ENCODE measurements at regions of chr12 and their contacts with region 1.

Region 1: DNA sequence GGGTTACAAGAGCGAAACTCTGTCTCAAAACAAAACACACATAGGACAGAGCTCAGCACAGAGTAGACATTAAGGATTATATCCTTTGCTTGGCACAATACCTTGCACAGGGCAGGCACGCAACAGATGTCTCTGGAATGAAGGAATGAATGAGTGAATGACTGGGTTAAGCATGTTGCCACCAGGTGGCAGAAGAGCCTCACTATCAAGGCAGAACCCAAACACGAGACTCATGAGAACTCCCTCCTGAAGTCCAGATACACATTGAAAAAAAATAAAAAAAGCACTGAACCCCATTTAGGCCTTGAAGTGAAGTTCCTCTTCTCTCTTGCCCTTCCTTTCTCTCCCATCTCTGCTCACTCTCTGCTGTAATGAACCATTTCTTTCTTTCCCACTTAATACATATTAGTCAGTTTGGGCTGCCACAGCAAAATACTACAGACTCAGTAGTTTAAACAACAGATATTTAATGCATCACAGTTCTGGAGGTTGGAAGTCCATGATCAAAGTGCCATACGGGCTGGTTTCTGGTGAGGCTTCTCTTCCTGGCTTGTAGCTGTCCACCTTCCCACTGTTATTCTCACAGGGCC is 26.6 kb upstream of the LTA4H start:
- DNase-seq: no peak
- H3K4me3 ChIP-seq: no peak overlapping the region
- H3K27ac ChIP-seq: no peak overlapping the region
- H3K4me1 ChIP-seq: no peaks in the 10 kb centered on the region
- H3K27me3 ChIP-seq: no peaks in the 10 kb centered on the region
- CTCF ChIP-seq: peak; percentile 86 to 97 (median 93)
- POLR2A ChIP-seq: no peak

Region 2: GRCh38 chr12:96120359-96121100 is 58.6 kb after region 1 on chr12:
- intact Hi-C with region 1: no loop called
- DNase-seq: no peak
- H3K4me3 ChIP-seq: no peak overlapping the region
- H3K27ac ChIP-seq: no peak overlapping the region
- H3K4me1 ChIP-seq: no peaks in the 10 kb centered on the region
- H3K27me3 ChIP-seq: no peaks in the 10 kb centered on the region
- CTCF ChIP-seq: no peak
- POLR2A ChIP-seq: no peak

Region 3: GRCh38 chr12:96215919-96216273 is 153.9 kb after region 1 on chr12:
- intact Hi-C with region 1: loop called (anchors 2 kb)
- DNase-seq: no peak
- H3K4me3 ChIP-seq: no peak overlapping the region
- H3K27ac ChIP-seq: no peak overlapping the region
- H3K4me1 ChIP-seq: peaks cover 56% of the 10 kb centered on the region
- H3K27me3 ChIP-seq: no peaks in the 10 kb centered on the region
- CTCF ChIP-seq: no peak
- POLR2A ChIP-seq: no peak

Region 4: GRCh38 chr12:96303653-96304052 is 241.7 kb after region 1 on chr12:
- intact Hi-C with region 1: no loop called
- DNase-seq: no peak
- H3K4me3 ChIP-seq: no peak overlapping the region
- H3K27ac ChIP-seq: no peak overlapping the region
- H3K4me1 ChIP-seq: no peaks in the 10 kb centered on the region
- H3K27me3 ChIP-seq: no peaks in the 10 kb centered on the region
- CTCF ChIP-seq: no peak
- POLR2A ChIP-seq: no peak

Region 5: GRCh38 chr12:96514328-96514727 is 452.4 kb after region 1 on chr12:
- intact Hi-C with region 1: loop called (anchors 2 kb)
- DNase-seq: no peak
- H3K4me3 ChIP-seq: no peak overlapping the region
- H3K27ac ChIP-seq: no peak overlapping the region
- H3K4me1 ChIP-seq: no peaks in the 10 kb centered on the region
- H3K27me3 ChIP-seq: no peaks in the 10 kb centered on the region
- CTCF ChIP-seq: no peak
- POLR2A ChIP-seq: no peak